Right ventricle myocardium superior (tissue), 1 donor: ENCODE measurements at regions of chr6 and their contacts with region 1.

Region 1: DNA sequence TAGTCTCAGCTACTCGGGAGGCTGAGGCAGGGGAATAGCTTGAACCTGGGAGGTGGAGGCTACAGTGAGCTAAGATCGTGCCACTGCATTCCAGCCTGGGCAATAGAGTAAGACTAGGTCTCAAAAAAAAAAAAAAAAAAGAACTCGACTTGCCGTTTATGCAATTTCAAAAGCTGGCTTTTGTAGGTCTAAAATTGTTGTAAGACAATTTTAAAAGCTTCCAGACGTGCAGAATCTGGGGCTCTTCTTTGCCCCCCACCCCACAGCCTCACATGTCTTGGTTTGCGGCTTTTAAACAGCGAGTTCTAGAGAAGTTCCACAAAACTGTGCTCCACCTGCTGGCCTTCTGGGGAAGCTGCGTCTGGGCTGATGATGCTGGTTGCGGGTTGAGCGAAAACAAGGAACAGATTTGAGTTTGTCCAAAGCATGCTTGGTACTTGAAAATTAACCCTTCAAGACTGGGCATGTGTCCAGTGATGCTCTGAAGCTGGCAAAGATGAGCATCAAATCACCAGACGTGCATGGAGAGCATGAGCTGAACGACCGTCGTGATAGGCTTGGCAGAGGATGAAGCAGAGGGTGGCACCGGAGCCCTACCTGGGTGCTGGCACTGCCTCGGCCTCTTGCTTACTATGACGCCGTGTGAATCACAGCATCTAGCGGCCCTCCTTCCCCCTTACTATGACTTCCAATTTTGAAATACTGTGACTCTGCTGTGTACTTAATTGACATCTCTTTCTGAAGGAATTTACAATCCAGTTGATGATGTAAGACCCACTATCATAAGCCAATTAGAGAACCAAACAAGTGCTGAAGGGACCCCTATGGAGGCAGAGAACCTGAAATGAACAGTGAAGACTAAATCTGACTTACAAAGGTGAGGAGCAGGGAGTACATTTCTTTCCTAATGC is 171.4 kb downstream of the GMPR start:
- DNase-seq: peak; percentile 71
- ATAC-seq: peak; percentile 81

Region 2: DNA sequence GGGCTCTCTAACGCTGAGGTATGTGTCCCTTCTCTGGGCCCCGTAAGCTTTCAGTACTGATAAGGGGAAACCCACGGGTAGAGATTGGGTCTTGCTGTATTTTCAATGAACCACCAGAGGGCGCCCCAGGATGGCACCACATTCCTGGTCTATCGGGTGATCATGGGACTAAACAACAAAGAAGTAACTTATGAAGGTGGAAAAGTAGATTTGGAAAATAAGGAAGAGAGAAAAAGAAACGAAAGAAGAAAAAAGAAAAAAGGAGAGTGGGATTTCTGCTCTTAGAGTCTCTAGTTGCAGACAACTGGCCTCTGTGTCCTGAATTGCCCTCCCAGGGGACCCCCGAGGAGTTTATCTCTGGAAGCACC is 77.6 kb before region 1 on chr6:
- intact Hi-C with region 1: loop called (anchors 2 kb)
- DNase-seq: peak; percentile 77
- ATAC-seq: peak; percentile 92